Naive thymus-derived CD8-positive, alpha-beta T cell (primary cell): ENCODE measurements at regions of chr19 and their contacts with region 1.

Region 1: GRCh38 chr19:52685796-52686195 is 47.6 kb upstream of the ZNF83 start:
- DNase-seq: no peak
- ATAC-seq: no peak
- H3K4me3 Mint-ChIP-seq: no peak overlapping the region
- H3K27ac Mint-ChIP-seq: no peak overlapping the region
- H3K4me1 Mint-ChIP-seq: peaks cover 22 to 44% (median 37%) of the 10 kb centered on the region in 4 donors
- H3K27me3 Mint-ChIP-seq: no peaks in the 10 kb centered on the region

Region 2: DNA sequence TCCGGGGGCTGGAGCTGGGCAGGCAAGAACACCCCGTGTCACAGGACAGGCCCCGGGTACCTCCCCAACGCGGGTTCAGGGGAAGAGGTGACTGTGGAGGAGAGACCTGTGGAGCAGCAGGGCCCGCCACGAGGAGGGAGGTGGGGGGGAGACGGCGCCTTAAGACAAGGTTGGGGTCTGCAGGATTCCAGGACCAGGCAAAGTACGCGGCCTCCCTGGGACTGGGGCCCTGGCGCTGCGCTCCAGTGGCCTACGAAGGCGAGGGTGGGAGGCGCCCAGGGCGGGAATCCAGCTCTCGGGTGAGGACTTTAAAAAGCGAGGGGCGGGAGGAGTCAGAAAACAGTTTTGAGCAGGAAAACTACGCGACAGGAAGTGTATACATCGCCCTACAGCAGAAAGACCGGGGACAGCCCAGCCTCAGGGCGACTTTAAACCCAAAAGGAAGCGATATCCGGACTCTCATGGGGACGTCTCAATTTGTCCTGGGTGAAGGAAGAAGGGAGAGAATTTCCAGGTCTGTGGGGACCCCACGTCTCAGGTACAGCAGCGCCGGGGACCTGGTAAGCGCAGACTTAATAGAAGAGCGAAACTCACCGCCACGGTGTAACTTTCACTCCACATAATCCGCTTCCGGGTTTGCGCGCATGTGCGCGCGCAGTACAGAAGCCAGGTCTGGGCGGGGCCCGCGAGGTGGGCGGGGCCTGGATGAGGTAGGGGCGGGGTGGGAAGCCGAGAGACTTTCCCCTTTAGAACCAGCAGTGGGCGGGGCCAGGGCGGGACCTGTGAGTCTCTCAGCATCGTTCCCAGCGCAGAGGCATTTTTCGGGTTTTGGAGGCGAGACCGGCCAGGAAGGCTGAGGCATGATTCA is 47.8 kb before region 1 on chr19 and contains the start of gene ZNF83:
- POLR2A ChIA-PET with region 1: interaction called, 10 read pairs
- DNase-seq: peak; percentile 88 to 98 (median 94)
- ATAC-seq: peak; percentile 91
- H3K4me3 Mint-ChIP-seq: peak within 1 kb of the TSS; percentile 91 to 99 (median 96)
- H3K27ac Mint-ChIP-seq: peak within 1 kb of the TSS; percentile 96 to 100 (median 98)
- H3K4me1 Mint-ChIP-seq: peaks cover 14 to 34% (median 22%) of the 10 kb centered on the region in 4 donors
- H3K27me3 Mint-ChIP-seq: no peaks in the 10 kb centered on the region
- polyA plus RNA-seq, gene ZNF83: 10.9 to 18.3 (median 13.8) TPM

Region 3: DNA sequence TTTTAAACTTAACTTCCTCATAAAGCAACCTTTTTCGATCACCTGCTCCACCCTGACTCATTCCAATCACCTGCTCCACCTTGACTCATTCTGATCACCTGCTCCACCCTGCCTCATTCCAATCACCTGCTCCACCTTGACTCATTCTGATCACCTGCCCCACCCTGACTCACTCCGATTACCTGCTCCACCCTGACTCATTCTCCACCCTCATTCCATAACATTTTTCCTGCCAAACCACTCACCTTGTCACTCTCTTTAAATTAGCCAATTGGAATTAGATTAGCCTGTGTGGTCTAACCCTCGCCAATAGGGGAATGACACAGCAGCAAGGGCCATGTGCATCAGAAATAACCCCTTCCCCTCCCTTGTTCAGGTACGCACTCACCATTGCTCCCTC is 15.8 kb before region 1 on chr19:
- POLR2A ChIA-PET with region 1: no interaction called
- DNase-seq: no peak
- ATAC-seq: no peak
- H3K4me3 Mint-ChIP-seq: no peak overlapping the region
- H3K27ac Mint-ChIP-seq: peak overlapping the region in 5 of 10 donors; percentile 17 to 60 (median 40)
- H3K4me1 Mint-ChIP-seq: peaks cover 4 to 25% (median 14%) of the 10 kb centered on the region in 4 donors
- H3K27me3 Mint-ChIP-seq: no peaks in the 10 kb centered on the region

Region 4: DNA sequence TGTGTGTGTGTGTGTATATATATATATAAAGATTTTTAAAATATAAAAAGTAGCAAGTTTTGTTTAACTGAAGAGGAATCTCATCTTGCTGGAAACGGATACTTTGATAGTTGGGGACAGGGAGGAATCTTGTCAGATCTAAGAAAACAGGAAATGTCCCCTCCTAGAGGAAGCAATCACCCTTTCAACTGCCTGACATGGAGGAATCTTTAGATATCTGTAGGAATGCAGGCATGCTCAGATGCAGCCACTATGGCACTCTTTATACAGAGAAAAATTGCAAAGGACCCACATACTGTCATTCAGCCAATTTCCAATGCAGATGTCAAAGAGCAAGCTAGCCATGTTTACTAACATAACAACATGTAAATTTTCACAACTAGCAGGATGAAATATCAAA is 10.2 kb after region 1 on chr19:
- POLR2A ChIA-PET with region 1: no interaction called
- DNase-seq: no peak
- ATAC-seq: no peak
- H3K4me3 Mint-ChIP-seq: no peak overlapping the region
- H3K27ac Mint-ChIP-seq: no peak overlapping the region
- H3K4me1 Mint-ChIP-seq: peaks cover 0 to 10% (median 4%) of the 10 kb centered on the region in 4 donors
- H3K27me3 Mint-ChIP-seq: no peaks in the 10 kb centered on the region

Region 5: DNA sequence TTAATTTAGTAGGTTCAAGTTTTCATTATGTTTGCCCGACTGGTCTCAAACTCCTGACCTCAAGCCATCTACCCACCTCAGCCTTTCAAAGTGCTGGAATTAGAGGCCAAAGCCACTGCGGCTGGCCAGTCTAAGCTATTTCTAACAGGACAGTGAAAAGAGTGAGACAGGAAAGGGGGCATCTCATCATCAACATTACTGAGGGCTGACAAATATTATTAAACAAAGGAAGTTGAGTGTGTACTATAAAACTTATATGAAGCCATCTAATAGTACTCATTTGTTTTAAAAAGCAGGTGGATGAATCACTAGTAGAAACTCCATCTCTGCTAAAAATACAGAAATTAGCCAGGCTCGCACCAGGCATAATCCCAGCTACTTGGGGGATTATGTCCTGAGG is 24.7 kb after region 1 on chr19:
- POLR2A ChIA-PET with region 1: no interaction called
- DNase-seq: no peak
- ATAC-seq: no peak
- H3K4me3 Mint-ChIP-seq: no peak overlapping the region
- H3K27ac Mint-ChIP-seq: no peak overlapping the region
- H3K4me1 Mint-ChIP-seq: peaks cover 0 to 8% (median 5%) of the 10 kb centered on the region in 4 donors
- H3K27me3 Mint-ChIP-seq: no peaks in the 10 kb centered on the region

Region 6: DNA sequence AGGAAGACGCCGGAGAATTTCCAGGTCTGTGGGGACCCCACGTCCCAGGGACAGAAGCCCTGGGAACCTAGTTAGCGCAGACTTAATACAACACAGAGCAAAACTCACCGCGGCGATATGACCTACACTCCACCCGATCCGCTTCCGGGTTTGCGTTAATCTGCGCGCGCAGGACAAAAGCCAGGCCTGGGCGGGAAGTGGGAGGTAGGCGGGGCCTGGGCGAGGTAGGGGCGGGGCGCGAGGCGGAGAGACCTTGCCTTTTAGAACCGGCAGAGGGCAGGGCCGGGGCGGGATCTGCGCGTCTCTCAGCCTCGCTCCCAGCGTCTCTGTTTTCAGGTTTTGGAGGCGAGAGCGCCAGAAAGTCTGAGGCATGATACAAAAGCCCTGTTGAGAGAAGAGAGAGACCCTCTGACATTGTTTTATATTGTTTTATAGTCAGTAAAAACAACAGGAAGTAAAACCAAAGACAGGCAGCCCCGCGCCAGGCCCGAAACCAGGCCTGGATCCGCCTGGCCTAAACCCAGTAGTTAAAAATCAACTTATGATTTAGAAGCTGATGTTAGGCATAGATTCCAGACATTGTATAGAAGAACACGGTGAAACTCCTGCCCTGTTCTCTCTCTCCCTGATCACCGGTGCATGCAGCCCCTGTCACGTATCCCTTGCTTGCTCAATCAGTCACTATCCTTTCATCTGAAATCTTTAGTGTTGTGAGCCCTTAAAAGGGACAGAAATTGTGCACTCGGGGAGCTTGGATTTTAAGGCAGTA is 49.3 kb after region 1 on chr19 and contains the start of gene ZNF611:
- POLR2A ChIA-PET with region 1: no interaction called
- DNase-seq: peak; percentile 97 to 100 (median 99)
- ATAC-seq: peak; percentile 97 to 98
- H3K4me3 Mint-ChIP-seq: peak within 1 kb of the TSS; percentile 81 to 97 (median 94)
- H3K27ac Mint-ChIP-seq: peak within 1 kb of the TSS; percentile 93 to 98 (median 96)
- H3K4me1 Mint-ChIP-seq: peaks cover 13 to 36% (median 27%) of the 10 kb centered on the region in 4 donors
- H3K27me3 Mint-ChIP-seq: peaks cover 0 to 2% (median 0%) of the 10 kb centered on the region in 5 donors
- polyA plus RNA-seq, gene ZNF611: 20.9 to 34.8 (median 34.0) TPM